Naive thymus-derived CD4-positive, alpha-beta T cell (primary cell): ENCODE measurements at regions of chr2 and their contacts with region 1.

Region 1: DNA sequence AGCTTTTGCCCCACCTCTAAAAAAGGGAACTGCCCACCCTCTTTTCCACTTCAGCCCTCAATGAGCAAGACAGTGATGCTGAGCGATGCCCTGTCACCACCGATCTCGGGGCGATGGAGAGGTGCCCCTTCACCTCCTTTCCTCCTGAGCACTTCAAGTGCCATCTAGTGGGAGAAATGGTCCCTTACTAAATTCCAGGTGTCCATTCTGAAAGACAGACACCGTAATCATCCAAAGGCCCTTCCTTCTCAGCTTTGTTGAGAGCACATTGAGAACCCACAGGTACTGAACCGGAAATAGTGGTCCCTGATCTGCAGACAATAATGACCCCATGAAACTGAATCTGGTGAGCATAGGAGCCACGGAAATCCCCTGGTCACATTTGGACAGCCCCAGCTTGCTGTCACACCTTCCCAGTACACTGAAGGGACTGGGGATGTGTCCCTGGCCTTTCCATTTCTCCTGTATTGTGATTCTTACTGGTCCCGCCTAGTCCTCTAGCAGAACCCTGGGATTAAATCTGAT is 38.5 kb downstream of the KCTD18 start:
- DNase-seq: peak in 7 of 9 donors; percentile 20 to 47 (median 39)
- ATAC-seq: peak; percentile 56
- H3K4me3 ChIP-seq: no peak overlapping the region
- H3K4me3 Mint-ChIP-seq: peak overlapping the region in 7 of 10 donors; percentile 1 to 81 (median 46)
- H3K27ac ChIP-seq: no peak overlapping the region
- H3K27ac Mint-ChIP-seq: peak overlapping the region in 3 of 9 donors; percentile 32 to 64 (median 44)
- H3K4me1 ChIP-seq: peaks cover 20 to 30% of the 10 kb centered on the region in 2 donors
- H3K4me1 Mint-ChIP-seq: peaks cover 23 to 41% (median 35%) of the 10 kb centered on the region in 7 donors
- H3K27me3 ChIP-seq: no peaks in the 10 kb centered on the region
- H3K27me3 Mint-ChIP-seq: no peaks in the 10 kb centered on the region

Region 2: DNA sequence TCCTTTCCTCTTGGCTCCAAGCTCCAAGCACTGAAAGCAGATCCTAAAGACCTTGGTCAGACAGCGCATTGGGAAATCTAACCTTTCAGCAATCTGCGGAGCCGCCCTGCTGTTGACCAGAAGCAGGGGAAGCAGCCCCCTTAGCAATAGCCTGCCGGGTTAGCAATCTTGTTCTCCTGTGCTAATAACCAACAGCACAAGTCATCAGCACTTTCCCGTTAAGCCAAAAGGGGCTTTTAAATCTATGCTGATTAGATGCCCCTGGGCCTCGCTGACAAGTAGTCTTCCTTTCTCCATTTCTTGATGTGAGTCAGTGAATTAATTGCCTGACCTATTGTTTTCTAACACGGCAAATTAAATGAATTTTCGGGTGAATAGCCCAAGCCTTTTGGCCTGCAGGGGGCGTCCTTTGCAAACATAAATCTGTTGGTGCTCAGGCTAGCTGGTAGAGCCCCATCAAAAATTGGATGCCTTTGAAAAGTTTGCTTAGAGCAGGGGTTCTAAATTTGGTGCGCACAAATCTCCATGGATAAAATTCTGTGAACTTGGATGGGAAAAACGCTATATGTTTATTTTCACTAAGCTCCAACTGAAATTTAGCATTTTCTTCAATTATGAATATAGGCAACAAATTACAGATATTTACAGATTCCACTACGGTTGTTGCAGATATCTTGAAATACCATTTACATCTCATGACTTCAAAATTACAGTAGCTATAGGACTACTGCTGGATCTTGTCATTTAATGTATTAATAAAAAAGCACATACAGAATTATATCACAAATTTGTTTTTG is 491.4 kb before region 1 on chr2:
- CTCF ChIA-PET with region 1: interaction called, 31 read pairs
- POLR2A ChIA-PET with region 1: interaction called, 4 read pairs
- intact Hi-C with region 1: loop called (anchors 1 kb)
- DNase-seq: peak; percentile 42 to 79 (median 71)
- ATAC-seq: peak; percentile 85
- H3K4me3 ChIP-seq: no peak overlapping the region
- H3K4me3 Mint-ChIP-seq: peak overlapping the region in 1 of 10 donors; percentile 39
- H3K27ac ChIP-seq: no peak overlapping the region
- H3K27ac Mint-ChIP-seq: no peak overlapping the region
- H3K4me1 ChIP-seq: no peaks in the 10 kb centered on the region
- H3K4me1 Mint-ChIP-seq: peaks cover 0 to 22% (median 0%) of the 10 kb centered on the region in 7 donors
- H3K27me3 ChIP-seq: no peaks in the 10 kb centered on the region
- H3K27me3 Mint-ChIP-seq: peaks cover 0 to 2% (median 0%) of the 10 kb centered on the region in 5 donors

Region 3: DNA sequence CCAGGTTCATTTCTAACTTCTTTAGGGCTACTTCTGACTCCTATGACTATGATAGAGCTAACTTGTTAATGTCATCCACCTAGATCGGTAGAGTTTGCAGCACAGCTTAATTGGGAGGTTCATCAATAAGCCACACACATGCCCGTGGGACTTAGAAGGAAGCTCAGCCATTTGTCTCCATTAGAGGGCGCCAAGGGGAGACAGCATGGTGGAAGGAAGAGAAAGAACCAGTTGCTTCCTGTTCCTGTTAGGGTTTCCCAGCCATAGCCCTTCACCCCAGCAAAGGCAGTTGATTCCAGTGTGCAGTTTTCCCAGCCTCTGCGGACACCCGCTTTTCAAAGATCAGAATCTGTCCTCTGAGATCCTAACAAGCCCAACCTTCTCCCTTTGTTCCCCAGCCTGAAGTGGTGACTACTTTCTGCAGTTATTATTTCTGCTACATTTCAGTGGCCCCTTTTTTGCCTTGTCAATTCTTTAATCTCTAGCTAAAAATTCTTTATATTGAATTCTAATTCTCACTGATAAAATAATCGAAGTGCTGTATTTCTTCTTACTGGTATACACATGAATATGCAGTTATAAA is 485.7 kb before region 1 on chr2:
- CTCF ChIA-PET with region 1: interaction called, 31 read pairs
- POLR2A ChIA-PET with region 1: interaction called, 4 read pairs
- intact Hi-C with region 1: loop called (anchors 1 kb)
- DNase-seq: peak in 8 of 9 donors; percentile 28 to 53 (median 41)
- ATAC-seq: peak; percentile 74
- H3K4me3 ChIP-seq: no peak overlapping the region
- H3K4me3 Mint-ChIP-seq: no peak overlapping the region
- H3K27ac ChIP-seq: no peak overlapping the region
- H3K27ac Mint-ChIP-seq: peak overlapping the region in 2 of 9 donors; percentile 25 to 68
- H3K4me1 ChIP-seq: no peaks in the 10 kb centered on the region
- H3K4me1 Mint-ChIP-seq: peaks cover 0 to 8% (median 6%) of the 10 kb centered on the region in 7 donors
- H3K27me3 ChIP-seq: no peaks in the 10 kb centered on the region
- H3K27me3 Mint-ChIP-seq: no peaks in the 10 kb centered on the region

Region 4: DNA sequence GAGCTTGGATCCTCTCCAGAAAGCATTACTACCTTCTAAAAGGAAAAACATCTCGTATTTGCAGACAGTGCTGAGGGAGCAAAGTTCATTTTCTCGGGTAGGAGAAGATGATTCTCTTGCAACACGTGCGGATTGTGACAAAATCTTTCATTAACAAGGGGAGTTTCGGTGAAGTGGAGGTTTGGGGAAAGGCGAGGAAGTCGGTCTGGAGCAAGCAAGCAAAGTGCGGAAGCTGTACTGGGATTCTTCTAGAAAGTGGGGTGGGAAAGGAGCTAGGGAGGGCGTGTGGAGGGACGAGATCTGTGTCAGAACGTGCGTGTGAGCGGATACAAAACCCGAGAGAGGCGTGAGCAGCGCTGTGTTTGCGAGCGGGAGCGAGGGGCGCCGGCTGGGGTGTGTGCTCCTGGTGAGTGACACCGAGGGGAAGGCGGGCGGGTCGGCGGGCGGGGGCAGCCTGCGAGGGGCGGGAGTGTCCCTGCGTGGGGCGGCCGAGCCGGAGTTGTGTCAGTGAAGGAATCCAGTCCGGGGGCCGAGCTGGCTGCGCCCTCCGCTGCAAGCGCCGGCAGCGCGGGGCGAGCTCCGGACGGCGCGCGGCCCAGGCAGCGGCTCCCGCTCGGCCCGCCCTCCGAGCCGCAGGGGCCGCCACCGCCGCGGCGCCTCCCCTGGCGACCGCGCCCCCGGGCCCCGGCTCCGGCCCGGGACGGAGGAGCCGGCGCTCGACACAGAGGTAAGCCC is 165.0 kb before region 1 on chr2 and contains the start of gene SPATS2L:
- CTCF ChIA-PET with region 1: interaction called, 3 read pairs
- POLR2A ChIA-PET with region 1: interaction called, 3 read pairs
- intact Hi-C with region 1: loop called (anchors 2 kb)
- DNase-seq: peak in 7 of 9 donors; percentile 12 to 36 (median 22)
- ATAC-seq: peak; percentile 58
- H3K4me3 ChIP-seq: peak within 1 kb of the TSS; percentile 63
- H3K4me3 Mint-ChIP-seq: peak within 1 kb of the TSS; percentile 86 to 96 (median 92)
- H3K27ac ChIP-seq: no peak within 1 kb of the TSS
- H3K27ac Mint-ChIP-seq: peak within 1 kb of the TSS in 7 of 9 donors; percentile 14 to 88 (median 63)
- H3K4me1 ChIP-seq: peaks cover 0 to 4% of the 10 kb centered on the region in 2 donors
- H3K4me1 Mint-ChIP-seq: peaks cover 7 to 32% (median 11%) of the 10 kb centered on the region in 7 donors
- H3K27me3 ChIP-seq: no peaks in the 10 kb centered on the region
- H3K27me3 Mint-ChIP-seq: peaks cover 0 to 58% (median 16%) of the 10 kb centered on the region in 5 donors
- total RNA-seq, gene SPATS2L: 2.3 to 51.9 (median 3.5) TPM

Region 5: DNA sequence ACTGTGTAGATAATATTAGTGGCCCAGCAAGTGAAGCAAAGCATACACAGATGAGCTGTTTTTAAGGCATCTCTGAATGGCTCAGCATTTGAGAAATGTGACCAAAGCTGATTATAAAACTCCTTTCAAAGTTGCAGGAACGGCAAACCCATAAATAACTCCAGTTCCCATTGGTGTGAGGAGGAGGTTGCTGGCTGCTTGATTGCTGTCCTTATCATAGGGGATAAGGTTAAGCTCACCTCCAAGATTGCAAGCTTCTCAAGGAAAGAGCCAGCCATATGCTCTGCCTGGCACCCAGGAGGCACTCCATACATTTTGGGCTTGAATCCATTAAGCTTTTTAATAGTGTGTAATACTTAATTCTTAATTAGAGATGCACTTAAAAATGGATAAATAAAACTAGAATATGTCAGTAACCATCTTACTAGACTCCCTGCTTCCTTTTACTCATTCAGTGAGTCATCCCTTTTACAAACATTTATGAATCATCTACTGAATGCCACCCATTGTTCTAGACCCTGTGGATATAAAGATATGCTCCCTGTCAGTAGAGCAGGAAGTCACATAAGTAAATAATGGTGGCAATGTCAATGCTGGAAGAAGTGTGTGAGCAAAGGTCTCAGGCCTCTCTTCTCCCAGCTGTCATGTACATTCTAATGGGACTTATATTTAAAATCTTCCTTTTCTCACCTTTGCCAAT is 65.6 kb before region 1 on chr2:
- CTCF ChIA-PET with region 1: no interaction called
- POLR2A ChIA-PET with region 1: no interaction called
- intact Hi-C with region 1: loop called in 1 of 2 experiments (anchors 10 kb)
- DNase-seq: no peak
- ATAC-seq: peak; percentile 63
- H3K4me3 ChIP-seq: no peak overlapping the region
- H3K4me3 Mint-ChIP-seq: no peak overlapping the region
- H3K27ac ChIP-seq: no peak overlapping the region
- H3K27ac Mint-ChIP-seq: peak overlapping the region in 1 of 9 donors; percentile 14
- H3K4me1 ChIP-seq: no peaks in the 10 kb centered on the region
- H3K4me1 Mint-ChIP-seq: peaks cover 0 to 52% (median 8%) of the 10 kb centered on the region in 7 donors
- H3K27me3 ChIP-seq: no peaks in the 10 kb centered on the region
- H3K27me3 Mint-ChIP-seq: no peaks in the 10 kb centered on the region

Region 6: DNA sequence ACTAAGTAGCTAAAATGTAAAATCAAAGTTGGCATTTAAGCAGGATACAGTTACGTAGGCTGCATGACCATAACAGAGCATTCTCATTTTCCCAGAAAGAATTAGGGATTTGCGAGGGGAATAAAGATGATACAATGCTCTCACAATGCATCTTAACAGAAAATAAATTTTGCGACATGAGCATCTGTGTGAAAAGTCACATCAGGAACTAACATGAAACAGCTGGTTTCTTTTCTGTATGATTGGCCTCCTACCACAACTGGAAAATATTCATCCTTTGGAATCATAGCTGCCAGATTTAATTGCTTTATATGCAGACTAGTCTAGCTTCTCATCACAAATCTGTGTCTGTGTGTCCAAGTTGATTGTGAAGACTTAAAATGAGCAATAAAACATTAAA is 27.5 kb before region 1 on chr2:
- CTCF ChIA-PET with region 1: interaction called, 7 read pairs
- POLR2A ChIA-PET with region 1: no interaction called
- intact Hi-C with region 1: loop called in 1 of 2 experiments (anchors 1 kb)
- DNase-seq: no peak
- ATAC-seq: no peak
- H3K4me3 ChIP-seq: no peak overlapping the region
- H3K4me3 Mint-ChIP-seq: no peak overlapping the region
- H3K27ac ChIP-seq: no peak overlapping the region
- H3K27ac Mint-ChIP-seq: no peak overlapping the region
- H3K4me1 ChIP-seq: no peaks in the 10 kb centered on the region
- H3K4me1 Mint-ChIP-seq: peaks cover 0 to 26% (median 1%) of the 10 kb centered on the region in 7 donors
- H3K27me3 ChIP-seq: no peaks in the 10 kb centered on the region
- H3K27me3 Mint-ChIP-seq: no peaks in the 10 kb centered on the region

Region 7: GRCh38 chr2:200509612-200510433 is 38.4 kb after region 1 on chr2 and contains the start of gene KCTD18:
- CTCF ChIA-PET with region 1: interaction called, 3 read pairs
- POLR2A ChIA-PET with region 1: interaction called, 5 read pairs
- intact Hi-C with region 1: loop called in 1 of 2 experiments (anchors 10 kb)
- DNase-seq: peak; percentile 82 to 93 (median 87)
- ATAC-seq: peak; percentile 100
- H3K4me3 ChIP-seq: peak within 1 kb of the TSS; percentile 53
- H3K4me3 Mint-ChIP-seq: peak within 1 kb of the TSS; percentile 83 to 98 (median 94)
- H3K27ac ChIP-seq: peak within 1 kb of the TSS; percentile 74
- H3K27ac Mint-ChIP-seq: peak within 1 kb of the TSS; percentile 88 to 97 (median 95)
- H3K4me1 ChIP-seq: peaks cover 6 to 22% of the 10 kb centered on the region in 2 donors
- H3K4me1 Mint-ChIP-seq: peaks cover 10 to 51% (median 34%) of the 10 kb centered on the region in 7 donors
- H3K27me3 ChIP-seq: no peaks in the 10 kb centered on the region
- H3K27me3 Mint-ChIP-seq: no peaks in the 10 kb centered on the region
- total RNA-seq, gene KCTD18: 14.9 to 20.8 (median 18.6) TPM

Region 8: DNA sequence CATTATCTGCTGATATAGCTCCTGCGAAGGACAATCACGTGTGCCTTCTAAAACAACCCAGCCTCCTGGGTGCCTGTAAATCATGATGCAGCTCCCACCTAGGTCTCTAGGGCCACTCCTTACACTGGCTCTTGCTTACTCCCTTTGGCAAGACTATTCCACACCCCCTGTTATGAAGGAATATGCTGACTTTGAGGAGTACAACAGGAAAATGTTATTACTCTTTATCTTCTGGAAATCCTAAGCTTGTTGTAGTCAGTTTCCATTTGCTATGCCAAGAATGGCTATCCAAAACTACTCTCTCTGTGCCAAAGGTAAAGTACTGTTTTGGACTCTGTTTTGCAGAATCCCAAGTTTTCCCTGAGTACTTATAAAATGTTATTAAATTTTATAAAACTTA is 62.4 kb after region 1 on chr2:
- CTCF ChIA-PET with region 1: no interaction called
- POLR2A ChIA-PET with region 1: no interaction called
- intact Hi-C with region 1: no loop called
- DNase-seq: no peak
- ATAC-seq: no peak
- H3K4me3 ChIP-seq: no peak overlapping the region
- H3K4me3 Mint-ChIP-seq: no peak overlapping the region
- H3K27ac ChIP-seq: no peak overlapping the region
- H3K27ac Mint-ChIP-seq: no peak overlapping the region
- H3K4me1 ChIP-seq: no peaks in the 10 kb centered on the region
- H3K4me1 Mint-ChIP-seq: peaks cover 0 to 5% (median 0%) of the 10 kb centered on the region in 7 donors
- H3K27me3 ChIP-seq: no peaks in the 10 kb centered on the region
- H3K27me3 Mint-ChIP-seq: no peaks in the 10 kb centered on the region